BJ (cell line): ENCODE measurements at regions of chr2 and their contacts with region 1.

Region 1: GRCh38 chr2:189179570-189179950 is at the start of gene COL5A2:
- DNase-seq: peak; percentile 84
- H3K4me3 ChIP-seq: peak within 1 kb of the TSS; percentile 58
- H3K27me3 ChIP-seq: no peaks in the 10 kb centered on the region
- CTCF ChIP-seq: no peak
- polyA plus RNA-seq, gene COL5A2: 351 and 383 TPM in 2 replicates

Region 2: GRCh38 chr2:188524519-188525113 is 654.9 kb before region 1 on chr2:
- CTCF ChIA-PET with region 1: interaction called, 4 read pairs
- POLR2A ChIA-PET with region 1: interaction called, 18 read pairs
- DNase-seq: no peak
- H3K4me3 ChIP-seq: no peak overlapping the region
- H3K27me3 ChIP-seq: no peaks in the 10 kb centered on the region
- CTCF ChIP-seq: peak; percentile 64

Region 3: DNA sequence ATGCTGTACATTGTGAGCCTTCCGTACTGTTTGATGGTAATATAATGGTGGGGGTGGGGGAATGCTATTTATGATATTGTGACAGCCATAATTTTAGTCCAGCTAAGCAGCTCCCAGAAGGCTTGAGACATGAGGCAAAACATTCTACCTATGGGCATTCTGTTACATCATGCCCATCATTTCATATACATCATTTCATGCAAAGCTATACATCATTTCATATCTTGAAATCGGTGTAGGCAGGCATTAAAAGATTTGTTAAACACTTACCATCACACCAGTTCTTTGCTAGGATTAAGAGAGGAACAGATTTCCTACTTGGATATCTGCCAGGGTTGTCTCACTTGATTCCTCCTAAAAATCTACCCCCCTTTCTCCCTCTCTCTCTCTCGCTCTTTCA is 84.5 kb before region 1 on chr2:
- CTCF ChIA-PET with region 1: interaction called, 11 read pairs
- POLR2A ChIA-PET with region 1: interaction called, 5 read pairs
- DNase-seq: no peak
- H3K4me3 ChIP-seq: no peak overlapping the region
- H3K27me3 ChIP-seq: no peaks in the 10 kb centered on the region
- CTCF ChIP-seq: no peak

Region 4: GRCh38 chr2:189142893-189143759 is 36.4 kb before region 1 on chr2:
- CTCF ChIA-PET with region 1: interaction called, 11 read pairs
- POLR2A ChIA-PET with region 1: no interaction called
- DNase-seq: no peak
- H3K4me3 ChIP-seq: no peak overlapping the region
- H3K27me3 ChIP-seq: no peaks in the 10 kb centered on the region
- CTCF ChIP-seq: peak; percentile 55

Region 5: DNA sequence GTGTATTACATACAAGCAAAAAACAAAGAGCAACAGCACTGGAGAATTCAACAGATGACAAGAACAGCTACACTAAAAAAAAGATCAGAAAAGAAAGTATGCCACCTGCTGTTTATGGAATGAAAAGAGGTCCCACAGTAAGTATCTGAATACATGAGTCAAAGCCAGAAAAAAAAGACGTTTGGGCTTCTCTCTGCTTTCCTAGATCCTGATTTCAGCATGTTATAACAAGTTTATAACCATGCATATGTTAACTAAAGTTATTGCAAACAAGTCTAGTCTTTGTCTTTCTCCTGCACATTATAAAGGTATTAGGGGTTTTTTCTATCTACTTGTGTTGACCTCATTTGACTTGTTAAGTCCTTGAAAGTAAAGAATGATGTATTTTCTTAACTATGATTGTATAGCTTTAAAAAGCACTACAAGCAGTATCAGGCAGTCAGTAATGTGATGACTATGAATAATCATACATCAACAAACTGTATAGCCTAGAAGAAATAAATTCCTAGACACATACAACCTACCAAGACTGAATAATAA is 108.5 kb after region 1 on chr2:
- CTCF ChIA-PET with region 1: interaction called, 11 read pairs
- POLR2A ChIA-PET with region 1: interaction called, 3 read pairs
- DNase-seq: peak; percentile 55
- H3K4me3 ChIP-seq: no peak overlapping the region
- H3K27me3 ChIP-seq: no peaks in the 10 kb centered on the region
- CTCF ChIP-seq: peak; percentile 52